A549 (cell line): ENCODE measurements at regions of chr5 and their contacts with region 1.

Region 1: DNA sequence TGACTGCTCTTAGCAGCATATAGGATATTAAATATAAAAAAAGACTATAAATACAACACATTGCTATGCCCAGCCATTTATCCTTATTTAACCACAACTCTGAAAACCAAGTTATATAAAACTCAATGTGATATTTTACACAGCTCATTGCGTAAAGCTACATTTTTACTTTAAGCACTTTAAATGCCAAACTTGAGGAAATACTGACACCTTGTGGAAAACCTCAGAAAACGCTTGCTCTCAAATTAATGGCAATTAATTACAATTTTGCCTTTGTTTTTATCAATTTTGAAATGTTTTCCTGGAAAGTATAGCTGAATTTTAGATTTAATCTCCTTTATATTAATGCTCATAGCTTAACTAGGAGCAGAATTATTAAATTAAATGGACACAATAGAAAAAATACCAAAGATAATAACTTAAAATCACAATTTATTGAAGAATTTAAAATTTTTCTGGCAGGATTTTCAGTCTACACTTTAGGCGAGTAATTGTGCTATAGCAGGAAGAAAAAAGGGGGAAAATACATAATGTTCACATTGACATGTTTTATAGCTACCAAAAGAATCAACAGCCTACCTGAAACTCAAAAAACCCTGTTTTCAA is 25.2 kb upstream of the PLAC8L1 start:
- DNase-seq: peak in 1 of 2 experiments; percentile 23
- ATAC-seq: no peak
- H3K4me3 ChIP-seq: no peak overlapping the region
- H3K27ac ChIP-seq: no peak overlapping the region
- H3K4me1 ChIP-seq: no peaks in the 10 kb centered on the region
- CTCF ChIP-seq: peak; percentile 67
- EP300 ChIP-seq: no peak
- POLR2A ChIP-seq: no peak
- RAD21 ChIP-seq: peak; percentile 52 to 63

Region 2: GRCh38 chr5:146116361-146116760 is 14.2 kb before region 1 on chr5:
- CTCF ChIA-PET with region 1: interaction called, 16 read pairs
- POLR2A ChIA-PET with region 1: no interaction called
- DNase-seq: no peak
- ATAC-seq: no peak
- H3K4me3 ChIP-seq: no peak overlapping the region
- H3K27ac ChIP-seq: no peak overlapping the region
- H3K4me1 ChIP-seq: no peaks in the 10 kb centered on the region
- CTCF ChIP-seq: no peak
- EP300 ChIP-seq: no peak
- POLR2A ChIP-seq: no peak
- RAD21 ChIP-seq: no peak

Region 3: DNA sequence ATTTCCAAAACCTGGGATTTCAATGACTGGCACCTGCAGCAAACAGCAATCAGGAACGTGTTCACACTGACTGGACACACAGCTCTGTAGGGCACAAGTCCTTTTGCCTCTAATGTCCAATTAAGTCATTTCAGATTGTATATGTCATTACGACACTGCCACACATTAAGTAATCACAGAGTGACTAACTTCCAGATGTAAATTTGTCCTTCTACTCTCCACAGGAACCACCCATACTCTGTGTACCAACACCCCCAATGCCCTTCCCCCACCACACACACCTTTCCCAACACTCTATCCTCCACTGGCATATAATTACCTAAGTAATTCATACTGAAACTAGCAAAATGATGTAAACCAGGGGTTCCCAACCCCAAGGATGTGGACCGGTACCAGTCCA is 21.4 kb after region 1 on chr5:
- CTCF ChIA-PET with region 1: interaction called, 10 read pairs
- POLR2A ChIA-PET with region 1: no interaction called
- DNase-seq: no peak
- ATAC-seq: no peak
- H3K4me3 ChIP-seq: no peak overlapping the region
- H3K27ac ChIP-seq: no peak overlapping the region
- H3K4me1 ChIP-seq: no peaks in the 10 kb centered on the region
- CTCF ChIP-seq: no peak
- EP300 ChIP-seq: no peak
- POLR2A ChIP-seq: no peak
- RAD21 ChIP-seq: no peak

Region 4: GRCh38 chr5:146218168-146218567 is 87.6 kb after region 1 on chr5:
- CTCF ChIA-PET with region 1: no interaction called
- POLR2A ChIA-PET with region 1: no interaction called
- DNase-seq: no peak
- ATAC-seq: no peak
- H3K4me3 ChIP-seq: no peak overlapping the region
- H3K27ac ChIP-seq: no peak overlapping the region
- H3K4me1 ChIP-seq: peaks cover 16% of the 10 kb centered on the region
- CTCF ChIP-seq: no peak
- EP300 ChIP-seq: no peak
- POLR2A ChIP-seq: no peak
- RAD21 ChIP-seq: no peak